ENCODE measurements at regions of chr11 and their contacts with region 1.

Region 1: DNA sequence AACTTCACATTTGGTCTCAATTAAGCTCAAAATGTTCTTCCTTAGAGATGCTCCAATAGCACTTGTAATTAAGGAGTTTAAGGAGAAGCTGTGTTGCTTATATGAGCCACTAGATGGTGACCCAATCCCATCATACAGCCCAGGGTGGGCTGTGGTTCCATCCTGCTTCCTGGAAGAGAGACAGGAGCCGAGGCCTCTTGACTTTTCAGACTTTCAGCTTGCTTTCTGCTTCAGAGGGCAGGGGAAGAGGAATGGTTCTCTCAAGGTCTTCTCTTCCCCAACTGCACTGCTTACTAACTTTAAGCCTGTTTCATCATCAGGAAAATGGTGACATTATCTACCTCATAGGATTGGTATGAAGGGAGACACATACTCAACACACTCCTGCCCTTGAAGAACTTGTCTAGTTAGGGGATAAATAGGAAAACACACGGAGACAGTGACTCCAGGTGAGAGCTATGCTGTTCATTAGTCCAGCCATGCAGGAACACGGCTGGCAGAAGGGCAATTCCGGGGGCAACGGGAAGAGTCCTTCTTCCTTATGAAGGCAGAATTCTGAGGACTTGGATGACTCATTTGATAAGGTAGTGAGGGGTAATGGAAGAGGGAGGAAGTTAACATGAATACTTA is 20.1 kb downstream of the TMEM218 start:
- DNase-seq: no peak
- H3K4me3 Mint-ChIP-seq: no peak overlapping the region
- H3K27ac Mint-ChIP-seq: no peak overlapping the region
- H3K4me1 Mint-ChIP-seq: no peaks in the 10 kb centered on the region
- H3K27me3 Mint-ChIP-seq: no peaks in the 10 kb centered on the region

Region 2: DNA sequence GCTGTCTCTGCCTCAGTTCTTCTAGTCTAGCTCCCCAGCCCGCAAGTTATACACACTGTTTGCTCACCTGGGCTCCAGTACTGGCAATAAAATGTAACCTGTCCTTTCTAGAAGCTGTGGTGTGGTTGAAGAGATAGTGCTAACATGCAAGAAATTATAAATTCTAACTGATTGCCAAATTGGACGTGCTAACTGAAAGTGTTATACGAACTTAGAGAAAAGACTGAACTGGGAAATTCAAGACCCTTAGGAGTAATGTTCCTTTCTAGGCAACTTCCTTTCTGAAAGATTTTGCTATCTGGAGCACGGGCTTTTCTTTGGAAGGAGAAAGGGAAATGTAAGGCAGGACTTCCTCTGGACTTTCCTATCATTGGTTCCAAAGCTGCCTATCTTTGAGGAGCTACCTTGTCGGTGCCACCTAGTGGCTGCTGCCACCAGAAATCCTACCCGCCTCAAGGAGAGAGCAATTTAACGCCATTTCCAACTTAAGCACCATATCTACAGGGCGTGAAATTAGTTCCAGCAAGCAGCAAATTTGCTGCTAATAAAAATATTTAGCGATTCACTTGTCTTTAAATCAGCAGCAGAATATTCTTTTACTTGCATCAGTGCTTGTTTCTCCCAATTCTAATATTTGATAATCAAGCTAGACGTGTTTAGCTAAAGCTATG is 32.7 kb after region 1 on chr11:
- CTCF ChIA-PET with region 1: interaction called, 16 read pairs
- POLR2A ChIA-PET with region 1: no interaction called
- intact Hi-C with region 1: no loop called
- DNase-seq: peak; percentile 61
- H3K4me3 Mint-ChIP-seq: no peak overlapping the region
- H3K27ac Mint-ChIP-seq: no peak overlapping the region
- H3K4me1 Mint-ChIP-seq: peaks cover 6% of the 10 kb centered on the region
- H3K27me3 Mint-ChIP-seq: peaks cover 15% of the 10 kb centered on the region

Region 3: DNA sequence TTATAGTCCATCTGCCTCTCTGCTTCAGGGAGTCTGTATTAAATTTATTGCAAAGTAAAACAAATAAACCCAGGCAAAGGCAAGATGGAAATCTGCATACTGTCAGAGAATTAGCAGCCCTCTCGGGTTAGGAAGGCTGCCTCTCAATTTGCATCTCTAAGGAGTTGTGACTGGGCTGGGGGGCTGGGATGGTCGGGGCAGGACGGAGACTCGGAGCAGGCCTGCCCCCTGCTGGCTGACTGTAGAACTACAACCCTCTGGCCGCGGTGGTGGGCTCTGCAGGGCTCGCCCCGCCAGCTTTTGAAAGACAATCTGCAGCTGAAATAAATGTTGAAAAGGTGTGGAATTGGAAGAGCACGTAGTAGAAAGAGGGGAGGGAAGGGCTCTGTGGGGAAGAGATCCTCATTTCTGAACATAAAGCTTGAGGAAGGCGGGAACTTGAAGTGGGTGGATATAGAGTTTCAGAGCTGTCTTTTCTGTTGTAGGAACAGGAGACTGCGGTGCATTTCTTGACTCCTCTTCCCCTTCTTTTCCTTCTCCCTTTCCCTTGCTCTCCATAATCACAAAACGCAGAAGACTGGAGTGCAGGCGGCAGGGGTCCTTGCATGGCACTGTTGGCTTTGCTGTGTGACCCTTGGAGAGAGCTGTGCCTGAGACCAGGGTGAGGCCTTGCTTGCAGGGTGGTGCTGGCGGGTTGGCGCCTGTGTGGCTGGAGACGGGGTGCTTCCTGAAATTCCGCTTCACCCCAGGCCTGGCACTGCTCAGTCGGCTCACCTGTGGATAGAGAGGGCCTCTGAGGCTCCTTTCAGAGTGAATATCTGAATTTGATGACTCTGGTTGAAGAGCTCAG is 50.5 kb after region 1 on chr11:
- CTCF ChIA-PET with region 1: interaction called, 34 read pairs
- POLR2A ChIA-PET with region 1: no interaction called
- intact Hi-C with region 1: loop called (anchors 5 kb)
- DNase-seq: peak; percentile 62
- H3K4me3 Mint-ChIP-seq: no peak overlapping the region
- H3K27ac Mint-ChIP-seq: no peak overlapping the region
- H3K4me1 Mint-ChIP-seq: peaks cover 4% of the 10 kb centered on the region
- H3K27me3 Mint-ChIP-seq: peaks cover 21% of the 10 kb centered on the region

Region 4: DNA sequence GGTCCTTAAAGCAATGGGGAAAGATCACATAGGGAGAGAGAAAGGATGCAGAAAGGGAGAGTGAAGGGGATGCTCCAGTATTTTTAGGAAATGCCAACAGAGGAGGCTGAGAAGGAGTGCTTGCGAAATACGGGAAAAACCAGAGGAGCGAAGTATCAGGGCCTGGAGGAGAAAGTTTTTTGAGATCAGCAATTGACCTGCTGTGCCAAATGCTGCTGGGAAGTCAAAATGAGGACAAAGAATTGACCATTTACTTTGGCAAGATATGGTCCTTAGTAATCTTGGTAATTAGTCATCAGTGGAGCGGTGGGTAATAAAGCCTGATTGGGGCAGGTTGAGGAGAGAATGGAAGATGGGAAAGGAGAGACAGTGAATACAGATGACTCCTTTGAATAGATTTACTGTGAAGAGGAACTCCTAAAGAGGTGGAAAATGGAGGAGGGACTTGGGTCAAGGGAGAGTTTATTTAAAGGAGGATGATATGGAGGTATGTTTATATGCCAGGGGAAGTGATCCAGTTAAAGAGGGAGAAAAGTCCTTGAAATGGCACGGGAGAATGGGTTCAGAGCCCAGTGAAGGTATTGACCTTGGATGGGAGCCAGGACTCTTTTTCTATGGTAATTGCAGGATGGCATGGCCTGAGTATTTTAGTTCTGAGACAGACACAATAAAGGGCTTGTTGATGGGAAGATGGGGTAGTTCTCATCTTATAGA is 184.7 kb after region 1 on chr11:
- CTCF ChIA-PET with region 1: no interaction called
- POLR2A ChIA-PET with region 1: no interaction called
- intact Hi-C with region 1: no loop called
- DNase-seq: no peak
- H3K4me3 Mint-ChIP-seq: no peak overlapping the region
- H3K27ac Mint-ChIP-seq: no peak overlapping the region
- H3K4me1 Mint-ChIP-seq: no peaks in the 10 kb centered on the region
- H3K27me3 Mint-ChIP-seq: peaks cover 18% of the 10 kb centered on the region

Region 5: GRCh38 chr11:125404776-125405435 is 313.5 kb after region 1 on chr11:
- CTCF ChIA-PET with region 1: interaction called, 5 read pairs
- POLR2A ChIA-PET with region 1: no interaction called
- intact Hi-C with region 1: loop called (anchors 5 kb)
- DNase-seq: peak; percentile 79
- H3K4me3 Mint-ChIP-seq: no peak overlapping the region
- H3K27ac Mint-ChIP-seq: no peak overlapping the region
- H3K4me1 Mint-ChIP-seq: peaks cover 6% of the 10 kb centered on the region
- H3K27me3 Mint-ChIP-seq: peaks cover 48% of the 10 kb centered on the region